H1 (cell line): ENCODE measurements at regions of chr1 and their contacts with region 1.

Region 1: DNA sequence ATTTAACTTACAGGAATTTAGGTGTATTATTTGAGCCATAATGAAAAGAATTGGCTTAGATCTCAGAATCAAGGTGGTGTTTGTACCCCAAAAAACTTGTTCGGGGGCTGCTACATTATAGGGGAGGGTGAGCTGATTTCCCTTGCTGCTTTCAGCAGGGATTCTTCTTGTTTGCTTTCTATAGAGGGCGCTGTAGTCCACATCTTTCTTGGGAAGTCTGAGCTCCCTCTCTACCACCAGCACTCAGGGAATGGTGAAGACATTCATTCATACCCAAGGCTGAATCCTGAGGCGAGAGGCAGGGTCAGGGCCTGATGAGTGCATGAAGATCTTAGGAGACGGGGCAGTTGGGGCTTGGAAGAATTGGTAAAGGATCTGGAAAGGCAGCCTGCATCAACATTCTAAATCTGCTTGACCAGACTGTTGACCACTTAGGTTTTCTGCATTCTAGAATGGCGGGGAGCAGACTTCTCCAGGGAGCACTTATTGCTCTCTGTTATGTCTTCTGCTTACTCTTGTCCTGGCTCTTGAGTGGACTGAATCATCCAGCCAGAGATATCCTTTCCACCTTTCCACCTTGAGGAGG is 18.9 kb downstream of the SPATA46 start:
- DNase-seq: no peak
- H3K4me3 ChIP-seq: no peak overlapping the region
- H3K27ac ChIP-seq: no peak overlapping the region
- H3K4me1 ChIP-seq: peaks cover 0 to 8% (median 4%) of the 10 kb centered on the region in 4 experiments; a peak in 5 of 7 replicates
- H3K27me3 ChIP-seq: no peaks in the 10 kb centered on the region
- CTCF ChIP-seq: peak; percentile 14 to 81 (median 64)
- EP300 ChIP-seq: no peak
- POLR2A ChIP-seq: no peak
- RAD21 ChIP-seq: peak; percentile 81 to 88

Region 2: DNA sequence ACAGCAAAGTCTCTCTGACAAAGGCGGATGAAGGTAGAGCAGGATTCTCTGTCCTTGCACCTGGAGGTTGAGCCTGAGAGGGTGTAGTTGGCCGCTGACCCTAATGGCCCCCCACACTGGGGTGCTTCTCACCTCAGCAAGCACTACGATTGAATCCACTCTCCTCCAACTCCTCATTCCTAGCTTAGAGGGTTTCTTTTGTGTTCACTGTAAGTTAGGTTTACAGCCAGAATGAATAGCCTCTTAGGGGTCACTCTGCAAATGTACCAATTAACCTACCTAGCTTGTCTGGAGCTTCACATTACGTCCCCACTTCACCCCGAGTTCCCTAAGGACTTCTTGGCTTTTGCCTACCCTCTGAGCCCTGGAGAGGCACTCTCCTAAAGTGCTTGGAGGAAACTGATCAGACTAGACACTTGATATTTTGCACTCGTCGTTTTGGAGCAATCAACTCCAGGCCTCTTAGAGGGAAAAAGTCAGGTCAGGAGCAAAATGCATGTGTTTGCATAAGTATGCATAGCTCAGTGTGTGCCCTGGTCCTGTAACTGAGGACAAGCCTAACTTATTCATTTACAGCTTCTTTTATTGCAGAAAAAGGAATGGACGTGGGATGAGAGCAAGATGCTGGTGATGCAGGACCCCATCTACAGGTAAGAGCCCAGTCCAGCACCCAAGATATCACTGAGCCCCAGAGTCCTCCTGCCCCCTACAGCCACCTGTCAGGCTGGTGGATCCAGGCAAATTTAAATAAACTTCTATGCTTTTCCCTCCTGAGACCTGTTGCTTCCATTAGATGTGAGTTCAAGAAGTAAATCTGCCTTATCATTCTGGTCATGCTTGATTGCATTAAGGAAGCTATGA is 57.5 kb before region 1 on chr1:
- CTCF ChIA-PET with region 1: interaction called, 12 read pairs
- POLR2A ChIA-PET with region 1: no interaction called
- DNase-seq: no peak
- H3K4me3 ChIP-seq: no peak overlapping the region
- H3K27ac ChIP-seq: peak overlapping the region; percentile 70; the same call in 1 of the 2 replicates
- H3K4me1 ChIP-seq: peaks cover 0 to 9% (median 6%) of the 10 kb centered on the region in 4 experiments; a peak in 5 of 7 replicates
- H3K27me3 ChIP-seq: no peaks in the 10 kb centered on the region
- CTCF ChIP-seq: peak; percentile 38 to 72 (median 42)
- EP300 ChIP-seq: no peak
- POLR2A ChIP-seq: no peak
- RAD21 ChIP-seq: peak; percentile 58 to 64

Region 3: DNA sequence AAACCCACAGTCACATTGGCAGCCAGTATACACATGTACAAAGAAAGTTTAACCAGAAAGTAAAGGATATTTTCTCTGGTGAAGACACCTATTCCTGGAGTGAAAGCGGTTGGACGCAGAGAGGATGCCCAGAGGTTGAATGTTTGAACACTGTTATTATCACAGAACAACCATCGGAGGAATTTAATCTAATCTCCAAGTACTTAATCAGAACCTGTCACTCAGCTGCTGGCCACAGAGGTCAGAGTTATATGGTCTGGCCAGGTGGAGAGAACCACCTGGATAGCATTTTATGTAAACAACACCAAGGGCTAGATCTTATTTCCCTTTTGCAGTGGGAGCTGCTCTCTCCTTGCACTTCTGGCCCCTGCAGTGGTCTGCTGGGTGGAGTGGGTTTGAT is 10.5 kb before region 1 on chr1:
- CTCF ChIA-PET with region 1: interaction called, 59 read pairs
- POLR2A ChIA-PET with region 1: no interaction called
- DNase-seq: no peak
- H3K4me3 ChIP-seq: no peak overlapping the region
- H3K27ac ChIP-seq: no peak overlapping the region
- H3K4me1 ChIP-seq: no peaks in the 10 kb centered on the region
- H3K27me3 ChIP-seq: no peaks in the 10 kb centered on the region
- CTCF ChIP-seq: no peak
- EP300 ChIP-seq: no peak
- POLR2A ChIP-seq: no peak
- RAD21 ChIP-seq: no peak

Region 4: GRCh38 chr1:162381383-162381782 is 23.6 kb after region 1 on chr1 and contains the start of gene C1orf226:
- CTCF ChIA-PET with region 1: interaction called, 44 read pairs
- POLR2A ChIA-PET with region 1: no interaction called
- DNase-seq: no peak
- H3K4me3 ChIP-seq: no peak within 1 kb of the TSS
- H3K27ac ChIP-seq: no peak within 1 kb of the TSS
- H3K4me1 ChIP-seq: 0 out of 7 replicates have a peak, but pooled peaks cover 0 to 1% (median 0%) of the 10 kb centered on the region in 4 experiments
- H3K27me3 ChIP-seq: no peaks in the 10 kb centered on the region
- CTCF ChIP-seq: no peak
- EP300 ChIP-seq: no peak
- POLR2A ChIP-seq: no peak
- RAD21 ChIP-seq: no peak
- total RNA-seq, gene C1orf226: 18.8 and 19.5 TPM in 2 replicates

Region 5: DNA sequence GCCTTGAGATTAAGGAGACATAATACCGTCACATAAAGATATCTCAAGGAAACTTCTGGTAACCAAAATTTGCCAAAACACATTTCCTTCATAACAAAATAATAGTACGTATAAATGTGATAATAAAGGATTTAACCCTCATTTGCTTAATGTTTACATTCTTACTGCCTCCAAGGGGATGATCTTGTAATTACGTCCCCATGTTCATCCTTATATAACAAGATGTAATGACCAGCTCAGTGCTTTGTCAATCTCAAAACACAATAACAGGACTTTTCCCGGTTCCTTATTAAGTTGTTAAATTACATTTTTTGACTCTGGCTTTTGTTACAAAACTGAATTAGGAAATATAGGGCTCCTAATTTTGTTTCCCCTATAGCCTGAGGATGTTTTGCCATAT is 98.5 kb after region 1 on chr1:
- CTCF ChIA-PET with region 1: no interaction called
- POLR2A ChIA-PET with region 1: no interaction called
- DNase-seq: no peak
- H3K4me3 ChIP-seq: no peak overlapping the region
- H3K27ac ChIP-seq: no peak overlapping the region
- H3K4me1 ChIP-seq: no peaks in the 10 kb centered on the region
- H3K27me3 ChIP-seq: no peaks in the 10 kb centered on the region
- CTCF ChIP-seq: peak in 1 of 3 experiments; percentile 2; a peak in 1 of 4 replicates
- EP300 ChIP-seq: no peak
- POLR2A ChIP-seq: no peak
- RAD21 ChIP-seq: no peak